Spleen (tissue), 13 donors: ENCODE measurements at regions of chr1 and their contacts with region 1.

Region 1: DNA sequence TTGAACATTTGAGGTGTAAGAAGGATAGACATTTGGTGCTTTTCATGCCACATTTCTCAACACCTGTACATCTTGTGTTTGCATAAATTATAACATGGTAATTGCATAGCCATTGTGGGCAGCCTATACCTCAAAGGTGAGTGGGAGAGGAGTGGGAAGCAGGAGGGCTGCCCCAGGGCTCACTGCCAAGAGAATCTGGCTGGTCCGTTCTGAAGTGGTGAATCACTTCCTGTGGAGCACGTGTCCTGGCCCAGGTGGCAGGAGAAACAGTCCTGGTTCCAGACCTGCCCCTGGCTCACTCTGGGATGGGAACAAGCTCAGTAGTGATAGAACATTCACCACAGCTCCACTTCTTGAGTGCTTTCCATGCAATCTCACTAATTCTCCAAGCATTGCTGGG is 11.6 kb upstream of the OLFML2B start:
- DNase-seq: no peak
- H3K4me3 ChIP-seq: no peak overlapping the region
- H3K27ac ChIP-seq: no peak overlapping the region
- H3K4me1 ChIP-seq: no peaks in the 10 kb centered on the region
- H3K27me3 ChIP-seq: peaks cover 0 to 54% (median 0%) of the 10 kb centered on the region in 7 donors
- CTCF ChIP-seq: no peak
- POLR2A ChIP-seq: no peak

Region 2: DNA sequence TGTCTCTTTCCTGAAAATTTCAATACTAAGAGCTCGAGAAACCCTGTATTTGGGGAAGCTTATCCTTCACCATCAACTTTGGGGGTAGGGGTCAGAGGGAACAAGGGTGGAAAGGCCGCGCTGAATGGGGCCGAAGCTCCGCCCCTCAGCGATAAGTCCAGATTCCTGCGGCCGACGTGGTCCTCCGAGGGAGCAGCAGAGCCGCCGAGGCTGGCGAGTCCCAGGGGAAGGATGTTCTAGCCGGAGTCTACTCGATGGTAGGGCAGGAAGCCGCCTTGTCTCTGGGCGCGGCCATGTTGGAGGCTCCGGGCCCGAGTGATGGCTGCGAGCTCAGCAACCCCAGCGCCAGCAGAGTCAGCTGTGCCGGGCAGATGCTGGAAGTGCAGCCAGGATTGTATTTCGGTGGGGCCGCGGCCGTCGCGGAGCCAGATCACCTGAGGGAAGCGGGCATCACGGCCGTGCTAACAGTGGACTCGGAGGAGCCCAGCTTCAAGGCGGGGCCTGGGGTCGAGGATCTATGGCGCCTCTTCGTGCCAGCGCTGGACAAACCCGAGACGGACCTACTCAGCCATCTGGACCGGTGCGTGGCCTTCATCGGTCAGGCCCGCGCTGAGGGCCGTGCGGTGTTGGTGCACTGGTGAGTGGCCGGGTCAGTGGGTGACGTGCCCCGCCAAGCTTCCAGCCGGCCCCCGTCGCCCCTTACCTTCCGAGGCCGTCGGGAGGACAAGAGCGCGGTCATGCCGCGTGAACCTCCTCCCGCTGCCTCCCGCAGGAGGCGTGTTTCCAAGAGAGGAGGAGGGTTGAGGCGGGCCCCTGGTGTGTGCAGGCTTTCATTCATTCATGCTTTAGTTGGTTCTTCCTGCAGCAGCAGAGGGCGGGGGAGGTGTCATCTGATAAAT is 285.5 kb before region 1 on chr1 and contains the start of gene DUSP12:
- intact Hi-C with region 1: no loop called
- DNase-seq: peak; percentile 97
- H3K4me3 ChIP-seq: peak within 1 kb of the TSS; percentile 80 to 99 (median 88)
- H3K27ac ChIP-seq: peak within 1 kb of the TSS; percentile 67 to 94 (median 89)
- H3K4me1 ChIP-seq: peaks cover 8 to 58% (median 26%) of the 10 kb centered on the region in 6 donors
- H3K27me3 ChIP-seq: peaks cover 0 to 5% (median 0%) of the 10 kb centered on the region in 7 donors
- CTCF ChIP-seq: peak in 4 of 11 experiments; percentile 8 to 22 (median 14)
- POLR2A ChIP-seq: no peak
- total RNA-seq, gene DUSP12: 18.2 to 39.9 (median 23.7) TPM

Region 3: GRCh38 chr1:161792740-161793139 is 242.5 kb before region 1 on chr1:
- intact Hi-C with region 1: loop called (anchors 10 kb)
- DNase-seq: no peak
- H3K4me3 ChIP-seq: no peak overlapping the region
- H3K27ac ChIP-seq: no peak overlapping the region
- H3K4me1 ChIP-seq: no peaks in the 10 kb centered on the region
- H3K27me3 ChIP-seq: no peaks in the 10 kb centered on the region
- CTCF ChIP-seq: peak; percentile 4 to 52 (median 40)
- POLR2A ChIP-seq: no peak

Region 4: DNA sequence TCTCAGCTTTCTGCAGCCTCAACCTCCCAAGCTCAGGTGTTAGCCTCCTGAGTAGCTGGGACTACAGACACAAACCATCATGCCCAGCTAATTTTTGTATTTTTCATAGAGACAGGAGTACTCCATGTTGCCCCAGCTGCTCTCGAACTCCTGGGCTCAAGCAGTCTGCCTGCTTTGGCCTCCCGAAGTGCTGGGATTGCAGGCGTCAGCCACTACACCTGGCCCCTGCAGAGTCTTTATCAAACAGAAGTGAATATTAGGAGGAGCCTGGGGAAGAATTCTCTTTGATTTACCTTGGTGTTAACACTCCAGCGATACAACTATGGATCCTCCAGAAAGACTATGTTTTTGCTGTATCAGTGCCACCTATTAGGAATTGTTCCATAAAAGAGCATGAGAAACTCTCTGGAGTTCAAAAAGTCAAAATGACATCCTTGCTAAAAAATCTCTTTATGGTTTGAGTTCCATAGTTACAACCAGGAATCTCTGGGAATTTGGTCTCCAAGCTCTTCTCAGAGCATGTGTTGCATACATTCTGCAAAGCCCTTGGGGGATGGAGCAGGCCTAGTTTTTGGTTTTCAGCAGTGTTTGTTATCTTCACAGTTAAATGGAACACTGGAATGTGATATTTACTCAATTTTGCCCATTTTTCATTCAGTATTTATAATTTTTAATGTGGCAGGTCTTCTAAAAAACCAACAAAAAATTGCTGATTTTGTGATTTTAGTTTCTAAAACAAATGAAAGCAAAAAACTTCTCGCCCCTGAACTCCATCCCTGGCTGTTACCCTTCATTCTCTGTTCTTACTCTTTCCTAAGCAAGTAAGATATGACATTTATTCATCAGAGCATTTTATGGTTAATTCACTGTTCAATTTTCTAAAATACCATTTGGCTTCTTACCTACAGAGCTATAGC is 88.9 kb before region 1 on chr1:
- intact Hi-C with region 1: no loop called
- DNase-seq: no peak
- H3K4me3 ChIP-seq: no peak overlapping the region
- H3K27ac ChIP-seq: no peak overlapping the region
- H3K4me1 ChIP-seq: peaks cover 0 to 17% (median 0%) of the 10 kb centered on the region in 6 donors
- H3K27me3 ChIP-seq: no peaks in the 10 kb centered on the region
- CTCF ChIP-seq: no peak
- POLR2A ChIP-seq: no peak

Region 5: GRCh38 chr1:162187687-162188276 is 152.5 kb after region 1 on chr1:
- intact Hi-C with region 1: no loop called
- DNase-seq: no peak
- H3K4me3 ChIP-seq: no peak overlapping the region
- H3K27ac ChIP-seq: no peak overlapping the region
- H3K4me1 ChIP-seq: peaks cover 0 to under 1% (median 0%) of the 10 kb centered on the region in 6 donors
- H3K27me3 ChIP-seq: no peaks in the 10 kb centered on the region
- CTCF ChIP-seq: no peak
- POLR2A ChIP-seq: no peak